Naive thymus-derived CD4-positive, alpha-beta T cell (primary cell): ENCODE measurements at regions of chr11 and their contacts with region 1.

Region 1: GRCh38 chr11:16613512-16614381 is 124.7 kb upstream of the C11orf58 start:
- DNase-seq: peak in 7 of 9 donors; percentile 23 to 59 (median 36)
- ATAC-seq: peak; percentile 87
- H3K4me3 ChIP-seq: peak overlapping the region; percentile 37
- H3K4me3 Mint-ChIP-seq: peak overlapping the region; percentile 69 to 81 (median 76)
- H3K27ac ChIP-seq: no peak overlapping the region
- H3K27ac Mint-ChIP-seq: peak overlapping the region in 1 of 9 donors; percentile 46
- H3K4me1 ChIP-seq: peaks cover 0 to 16% of the 10 kb centered on the region in 2 donors
- H3K4me1 Mint-ChIP-seq: peaks cover 14 to 36% (median 26%) of the 10 kb centered on the region in 7 donors
- H3K27me3 ChIP-seq: peaks cover 6 to 30% of the 10 kb centered on the region in 2 donors
- H3K27me3 Mint-ChIP-seq: peaks cover 41 to 64% (median 59%) of the 10 kb centered on the region in 5 donors

Region 2: DNA sequence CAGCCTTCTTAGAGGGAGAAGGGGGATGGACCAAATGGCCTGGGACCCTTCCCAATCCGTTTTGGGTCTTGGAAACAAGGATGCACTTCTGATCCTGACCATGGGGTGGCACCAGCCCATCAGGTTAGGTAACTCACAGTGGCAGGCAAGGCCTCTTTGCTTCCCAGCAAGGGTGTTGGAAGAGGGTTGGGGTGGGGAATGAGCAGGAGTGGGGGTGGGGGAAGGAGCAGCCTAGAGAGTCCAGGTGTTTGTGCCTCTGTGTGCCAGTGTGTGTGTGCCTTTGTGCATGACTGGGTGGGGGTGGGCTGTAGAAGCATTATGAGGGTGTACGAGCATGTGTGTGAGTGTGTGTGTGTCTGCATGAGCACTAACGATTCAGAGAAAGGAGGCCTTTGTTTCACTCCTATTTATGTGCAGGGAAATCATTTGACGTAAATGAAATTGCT is 1285.9 kb before region 1 on chr11:
- CTCF ChIA-PET with region 1: no interaction called
- POLR2A ChIA-PET with region 1: no interaction called
- intact Hi-C with region 1: loop called in 1 of 2 experiments (anchors 10 kb)
- DNase-seq: no peak
- ATAC-seq: no peak
- H3K4me3 ChIP-seq: no peak overlapping the region
- H3K4me3 Mint-ChIP-seq: no peak overlapping the region
- H3K27ac ChIP-seq: no peak overlapping the region
- H3K27ac Mint-ChIP-seq: no peak overlapping the region
- H3K4me1 ChIP-seq: no peaks in the 10 kb centered on the region
- H3K4me1 Mint-ChIP-seq: no peaks in the 10 kb centered on the region
- H3K27me3 ChIP-seq: no peaks in the 10 kb centered on the region
- H3K27me3 Mint-ChIP-seq: peaks cover 0 to 29% (median 13%) of the 10 kb centered on the region in 5 donors

Region 3: DNA sequence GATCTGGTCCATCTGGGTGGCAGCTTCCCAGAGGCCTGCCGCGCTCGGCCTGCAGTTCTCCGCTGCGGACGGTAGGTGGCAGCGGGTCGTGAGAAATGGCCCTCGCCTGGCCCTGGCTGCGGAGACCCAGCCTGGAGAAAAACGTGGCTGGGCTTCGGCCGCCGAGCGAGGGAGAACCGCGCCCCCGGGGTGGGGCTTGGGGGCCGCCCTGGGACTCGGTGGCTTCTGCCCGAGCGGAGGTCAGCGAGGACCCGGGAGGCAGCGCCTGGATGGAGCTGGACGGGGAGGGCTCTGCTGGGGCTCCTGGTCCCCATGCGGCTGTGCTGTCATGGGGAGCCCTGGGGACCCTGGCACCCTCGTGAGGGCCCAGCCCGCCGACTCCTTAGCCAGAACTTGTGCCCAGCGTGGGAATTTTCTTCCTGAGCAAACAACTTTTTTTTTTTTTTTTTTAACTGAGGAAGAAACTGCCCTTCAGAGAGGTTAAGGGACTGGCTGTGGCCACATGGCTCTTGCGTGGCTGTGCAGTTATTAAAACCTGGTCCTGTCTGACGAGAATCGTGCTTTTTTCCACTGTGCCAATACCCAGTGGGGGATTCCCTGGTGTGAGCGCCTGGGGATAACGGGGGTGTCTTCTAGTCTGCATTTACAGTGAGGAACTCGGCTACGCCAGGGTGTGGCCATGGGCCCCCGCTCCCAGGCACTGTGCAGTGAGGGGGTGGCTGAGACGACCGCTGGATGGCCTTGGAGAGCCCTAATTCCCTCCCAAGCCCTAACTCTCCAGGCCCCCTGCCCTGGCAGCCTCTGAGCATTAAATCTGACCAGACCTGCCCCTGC is 963.4 kb before region 1 on chr11:
- CTCF ChIA-PET with region 1: interaction called, 3 read pairs
- POLR2A ChIA-PET with region 1: no interaction called
- intact Hi-C with region 1: loop called in 1 of 2 experiments (anchors 2 kb)
- DNase-seq: peak; percentile 20 to 78 (median 51)
- ATAC-seq: peak; percentile 92
- H3K4me3 ChIP-seq: no peak overlapping the region
- H3K4me3 Mint-ChIP-seq: peak overlapping the region in 5 of 10 donors; percentile 34 to 60 (median 39)
- H3K27ac ChIP-seq: no peak overlapping the region
- H3K27ac Mint-ChIP-seq: no peak overlapping the region
- H3K4me1 ChIP-seq: peaks cover 0 to 5% of the 10 kb centered on the region in 2 donors
- H3K4me1 Mint-ChIP-seq: peaks cover 3 to 12% (median 5%) of the 10 kb centered on the region in 7 donors
- H3K27me3 ChIP-seq: no peaks in the 10 kb centered on the region
- H3K27me3 Mint-ChIP-seq: peaks cover 19 to 34% (median 29%) of the 10 kb centered on the region in 5 donors

Region 4: DNA sequence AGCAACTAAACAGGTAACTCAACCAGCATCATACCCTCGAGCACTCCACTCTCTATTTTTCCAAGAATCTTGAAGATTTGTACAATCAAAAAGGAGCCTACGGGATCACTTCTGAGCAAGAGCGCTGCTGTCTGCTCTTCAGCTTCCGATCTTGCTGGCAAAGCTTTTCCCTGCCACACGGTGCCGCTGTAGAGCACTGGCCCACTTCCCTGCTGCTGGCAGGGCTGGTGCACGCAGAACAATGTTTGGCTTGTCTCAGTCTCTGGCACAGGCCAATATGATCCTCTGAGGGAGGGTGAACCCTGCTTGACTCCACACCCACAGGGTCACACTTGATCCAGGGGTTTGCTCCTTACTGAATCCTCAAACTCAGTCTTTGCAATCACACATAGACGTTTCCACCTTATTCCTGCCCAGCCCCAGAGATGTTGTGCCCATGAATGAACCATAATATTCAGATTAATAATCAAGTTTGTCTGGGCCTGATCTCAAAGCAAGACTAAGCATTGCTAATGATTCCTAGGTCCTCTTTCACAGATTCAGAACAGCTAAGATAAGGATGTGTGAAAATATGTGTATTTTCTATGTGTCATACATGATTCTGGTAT is 794.0 kb before region 1 on chr11:
- CTCF ChIA-PET with region 1: no interaction called
- POLR2A ChIA-PET with region 1: no interaction called
- intact Hi-C with region 1: loop called in 1 of 2 experiments (anchors 1 kb)
- DNase-seq: peak in 2 of 9 donors; percentile 17 to 44
- ATAC-seq: peak; percentile 59
- H3K4me3 ChIP-seq: no peak overlapping the region
- H3K4me3 Mint-ChIP-seq: no peak overlapping the region
- H3K27ac ChIP-seq: no peak overlapping the region
- H3K27ac Mint-ChIP-seq: no peak overlapping the region
- H3K4me1 ChIP-seq: no peaks in the 10 kb centered on the region
- H3K4me1 Mint-ChIP-seq: peaks cover 0 to 3% (median 0%) of the 10 kb centered on the region in 7 donors
- H3K27me3 ChIP-seq: no peaks in the 10 kb centered on the region
- H3K27me3 Mint-ChIP-seq: peaks cover 4 to 20% (median 18%) of the 10 kb centered on the region in 5 donors

Region 5: DNA sequence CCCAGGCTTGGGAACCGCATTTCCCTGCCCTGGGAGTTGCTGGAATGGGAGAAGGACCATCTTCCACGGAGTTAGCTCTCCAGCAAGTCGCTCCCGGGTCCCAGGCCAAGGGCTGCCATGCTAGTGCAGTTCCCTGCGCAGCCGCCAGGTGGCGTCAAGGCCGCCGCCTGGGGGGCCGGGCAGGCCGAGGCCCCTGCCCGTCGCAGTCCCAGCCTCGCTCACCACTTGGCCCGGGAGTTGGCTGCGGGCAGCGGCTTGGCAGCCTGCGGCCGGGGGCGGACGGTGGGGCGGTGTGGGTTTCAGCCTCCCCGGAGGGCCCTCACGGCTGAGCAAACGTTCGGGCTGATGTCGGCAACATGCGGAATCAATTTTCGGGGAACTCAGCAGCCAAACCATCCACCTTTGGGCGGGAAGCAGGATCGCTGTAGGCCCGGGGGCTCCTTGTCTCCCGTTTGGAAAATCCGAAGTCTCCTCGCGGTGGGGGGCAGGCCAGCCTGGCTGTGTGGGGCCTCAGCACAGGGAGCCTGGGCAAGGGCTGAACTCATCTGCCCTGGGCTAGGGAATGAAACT is 672.5 kb before region 1 on chr11:
- CTCF ChIA-PET with region 1: no interaction called
- POLR2A ChIA-PET with region 1: no interaction called
- intact Hi-C with region 1: loop called in 1 of 2 experiments (anchors 5 kb)
- DNase-seq: peak in 1 of 9 donors; percentile 35
- ATAC-seq: peak; percentile 22
- H3K4me3 ChIP-seq: no peak overlapping the region
- H3K4me3 Mint-ChIP-seq: no peak overlapping the region
- H3K27ac ChIP-seq: no peak overlapping the region
- H3K27ac Mint-ChIP-seq: no peak overlapping the region
- H3K4me1 ChIP-seq: no peaks in the 10 kb centered on the region
- H3K4me1 Mint-ChIP-seq: no peaks in the 10 kb centered on the region
- H3K27me3 ChIP-seq: peaks cover 0 to 2% of the 10 kb centered on the region in 2 donors
- H3K27me3 Mint-ChIP-seq: peaks cover 0 to 24% (median 5%) of the 10 kb centered on the region in 5 donors

Region 6: DNA sequence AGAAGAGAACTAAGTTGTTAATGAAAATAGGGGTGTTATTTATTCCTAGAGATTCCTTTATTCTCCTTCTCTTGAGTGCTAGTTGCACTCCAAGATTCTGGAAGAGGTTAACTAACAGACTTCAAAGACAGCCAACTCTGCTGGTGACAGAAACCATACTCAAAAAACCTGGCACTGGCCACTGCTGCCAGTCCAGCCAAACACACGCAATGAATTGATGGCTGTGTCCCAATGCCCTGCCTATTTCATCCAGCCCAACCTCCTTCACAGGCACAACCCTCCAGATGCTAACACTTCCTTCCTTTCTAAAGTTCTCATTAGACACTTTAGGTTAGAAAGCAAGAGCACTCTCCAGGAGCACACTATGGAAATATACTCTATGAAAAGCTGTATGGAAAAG is 26.1 kb before region 1 on chr11:
- CTCF ChIA-PET with region 1: no interaction called
- POLR2A ChIA-PET with region 1: no interaction called
- intact Hi-C with region 1: no loop called
- DNase-seq: no peak
- ATAC-seq: no peak
- H3K4me3 ChIP-seq: no peak overlapping the region
- H3K4me3 Mint-ChIP-seq: no peak overlapping the region
- H3K27ac ChIP-seq: no peak overlapping the region
- H3K27ac Mint-ChIP-seq: no peak overlapping the region
- H3K4me1 ChIP-seq: no peaks in the 10 kb centered on the region
- H3K4me1 Mint-ChIP-seq: no peaks in the 10 kb centered on the region
- H3K27me3 ChIP-seq: no peaks in the 10 kb centered on the region
- H3K27me3 Mint-ChIP-seq: peaks cover 4 to 30% (median 8%) of the 10 kb centered on the region in 5 donors

Region 7: DNA sequence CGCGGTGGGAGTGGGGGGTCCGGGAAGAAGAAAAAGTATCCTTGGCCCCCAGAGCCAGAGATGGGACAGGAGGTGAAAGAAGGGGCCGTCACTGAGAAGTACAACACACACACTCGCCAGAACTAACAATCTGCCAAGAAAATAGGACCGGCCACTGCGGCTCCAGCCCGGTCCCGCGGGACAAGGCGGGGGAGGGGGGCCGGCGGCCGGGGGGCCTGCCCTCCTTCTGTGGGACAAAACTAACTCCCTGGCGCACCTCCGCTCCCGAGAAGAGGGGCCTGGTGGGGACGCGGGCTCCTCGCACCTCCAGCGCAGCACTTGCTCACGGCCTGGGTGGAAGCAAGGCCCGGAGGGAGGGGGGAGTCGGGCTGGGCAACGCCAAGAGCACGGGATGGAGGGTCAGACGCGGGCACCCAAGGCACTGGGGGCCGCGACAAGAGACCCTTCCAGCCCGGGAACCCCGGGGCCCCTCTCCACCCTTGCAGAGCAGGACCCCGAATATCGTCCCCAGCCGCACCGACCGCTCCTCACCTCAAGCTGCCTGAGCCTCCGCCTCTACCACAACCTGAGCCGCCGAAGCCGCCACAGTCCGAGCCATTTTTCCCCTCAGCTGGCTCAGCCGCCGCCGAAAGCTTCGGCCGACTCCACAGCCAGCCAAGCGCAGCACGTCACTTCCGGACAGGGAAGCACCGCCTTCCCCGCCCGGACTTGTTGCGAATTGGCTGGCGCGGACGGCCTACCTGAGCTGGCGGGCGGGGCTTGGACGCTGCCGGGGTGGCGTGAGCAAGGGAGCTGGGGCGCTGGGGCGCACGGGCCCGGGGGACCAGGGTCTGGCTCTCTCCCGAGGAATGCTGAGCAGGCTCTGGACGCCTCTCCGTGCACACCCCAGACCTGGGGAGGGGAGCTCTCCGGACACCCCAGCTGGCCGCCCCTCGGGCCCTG is 593.8 kb after region 1 on chr11 and contains the start of gene PIK3C2A:
- CTCF ChIA-PET with region 1: no interaction called
- POLR2A ChIA-PET with region 1: no interaction called
- intact Hi-C with region 1: no loop called
- DNase-seq: peak; percentile 84 to 94 (median 91)
- ATAC-seq: peak; percentile 98
- H3K4me3 ChIP-seq: peak within 1 kb of the TSS; percentile 93
- H3K4me3 Mint-ChIP-seq: peak within 1 kb of the TSS; percentile 90 to 99 (median 98)
- H3K27ac ChIP-seq: peak within 1 kb of the TSS; percentile 93
- H3K27ac Mint-ChIP-seq: peak within 1 kb of the TSS; percentile 87 to 99 (median 97)
- H3K4me1 ChIP-seq: peaks cover 15 to 19% of the 10 kb centered on the region in 2 donors
- H3K4me1 Mint-ChIP-seq: peaks cover 34 to 57% (median 48%) of the 10 kb centered on the region in 7 donors
- H3K27me3 ChIP-seq: no peaks in the 10 kb centered on the region
- H3K27me3 Mint-ChIP-seq: no peaks in the 10 kb centered on the region
- total RNA-seq, gene PIK3C2A: 25.4 to 56.4 (median 42.0) TPM